Left cardiac atrium (tissue), 4 donors: ENCODE measurements at regions of chr20 and their contacts with region 1.

Region 1: GRCh38 chr20:11255860-11256259 is 582.1 kb upstream of the JAG1 start:
- DNase-seq: no peak
- ATAC-seq: no peak

Region 2: DNA sequence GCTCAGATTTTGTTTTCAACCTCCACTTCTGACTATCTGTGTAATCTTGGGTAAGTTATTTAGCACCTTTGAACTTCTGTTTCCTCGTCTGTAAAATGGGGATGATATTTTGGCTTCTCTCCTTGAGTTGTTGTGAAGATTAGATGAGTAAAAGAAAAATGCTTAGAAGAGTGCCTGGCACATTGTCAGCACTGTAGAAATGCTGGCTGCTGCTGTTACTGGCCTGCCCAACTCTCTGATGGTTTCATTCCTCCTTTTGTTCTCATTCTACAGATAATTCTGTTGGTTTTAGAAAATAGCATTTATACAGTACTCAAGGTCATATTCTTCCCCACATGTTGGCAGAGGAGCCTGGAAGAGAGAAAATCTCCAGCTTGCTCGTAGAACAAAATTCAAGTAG is 34.8 kb before region 1 on chr20:
- intact Hi-C with region 1: loop called in 1 of 2 experiments (anchors 5 kb)
- DNase-seq: no peak
- ATAC-seq: peak in 1 of 2 donors; percentile 13